Sigmoid colon (tissue), 7 donors: ENCODE measurements at regions of chr3 and their contacts with region 1.

Region 1: DNA sequence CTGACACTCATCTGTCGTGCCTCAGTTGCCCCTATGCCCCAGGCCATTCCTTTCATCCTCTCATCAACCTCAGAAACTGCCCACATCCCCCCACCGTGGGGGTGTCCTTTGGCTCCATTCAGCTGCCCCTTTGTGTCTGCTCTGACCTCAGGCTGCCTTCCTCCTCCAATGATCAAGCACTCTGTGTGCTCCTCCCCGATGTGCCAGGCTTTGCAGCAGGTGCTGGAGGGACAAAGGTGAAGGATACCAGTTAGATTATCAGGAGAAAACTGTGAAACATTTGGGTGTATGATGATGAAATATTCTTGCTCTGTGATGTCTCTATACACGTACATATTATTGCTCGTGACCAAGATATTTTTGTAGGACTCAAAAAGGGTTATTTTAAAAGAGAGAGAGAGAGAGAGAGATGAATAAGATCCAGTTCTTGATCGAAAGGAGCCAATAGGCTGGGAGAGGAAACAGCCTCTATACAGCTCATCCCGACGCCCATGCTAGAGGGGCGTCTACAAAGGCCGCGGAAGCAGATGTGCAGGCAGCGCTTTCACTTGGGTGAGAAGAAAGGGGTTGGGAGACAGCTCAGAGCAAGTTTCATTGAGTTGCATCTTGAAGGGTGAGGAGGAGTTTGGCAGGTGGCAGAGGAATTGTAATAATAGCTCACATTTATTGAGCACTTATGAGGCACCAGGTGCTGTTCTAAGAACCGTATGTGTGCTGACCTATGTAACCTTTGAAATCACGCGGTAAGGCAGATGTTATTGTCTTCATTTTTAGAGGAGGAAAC is 28.3 kb upstream of the ADCY5 start:
- DNase-seq: no peak
- H3K4me3 ChIP-seq: no peak overlapping the region
- H3K27ac ChIP-seq: no peak overlapping the region
- H3K4me1 ChIP-seq: no peaks in the 10 kb centered on the region
- H3K27me3 ChIP-seq: no peaks in the 10 kb centered on the region
- CTCF ChIP-seq: no peak
- EP300 ChIP-seq: no peak
- POLR2A ChIP-seq: no peak

Region 2: GRCh38 chr3:123459881-123460280 is 17.3 kb before region 1 on chr3:
- intact Hi-C with region 1: loop called (anchors 2 kb)
- DNase-seq: no peak
- H3K4me3 ChIP-seq: no peak overlapping the region
- H3K27ac ChIP-seq: no peak overlapping the region
- H3K4me1 ChIP-seq: no peaks in the 10 kb centered on the region
- H3K27me3 ChIP-seq: peaks cover 0 to 28% (median 5%) of the 10 kb centered on the region in 3 donors
- CTCF ChIP-seq: no peak
- EP300 ChIP-seq: no peak
- POLR2A ChIP-seq: no peak

Region 3: DNA sequence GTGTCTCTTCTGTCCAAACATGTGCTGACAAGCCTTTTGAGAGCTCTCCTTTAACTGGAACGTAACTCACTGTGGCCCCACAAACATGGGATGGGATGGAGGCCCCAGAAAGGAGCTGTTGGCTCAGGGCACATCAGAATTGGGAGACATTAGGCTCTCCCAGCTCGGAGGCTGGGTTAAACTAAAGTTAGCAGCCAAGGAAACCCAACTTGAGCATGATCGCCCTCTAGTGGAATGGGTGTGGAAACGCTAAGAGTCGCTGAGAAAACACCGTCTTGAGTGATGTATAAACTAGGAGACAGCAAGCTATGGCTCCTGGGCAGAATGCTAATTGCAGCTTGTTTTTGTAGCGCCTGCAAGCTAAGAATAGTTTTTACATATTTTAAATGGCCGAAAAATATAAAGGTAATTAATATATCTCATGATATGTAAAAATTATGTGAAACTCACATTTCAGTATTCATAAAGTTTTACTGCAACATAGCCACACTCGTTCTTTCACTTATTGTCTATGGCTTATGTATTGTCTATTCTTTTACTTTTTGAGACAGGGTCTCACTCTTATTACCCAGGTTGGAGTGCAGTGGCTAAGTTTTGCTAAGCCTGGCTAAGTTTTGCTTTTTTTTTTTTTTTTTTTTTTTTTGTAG is 246.5 kb after region 1 on chr3:
- intact Hi-C with region 1: no loop called
- DNase-seq: peak; percentile 79
- H3K4me3 ChIP-seq: no peak overlapping the region
- H3K27ac ChIP-seq: peak overlapping the region; percentile 60 to 92 (median 72)
- H3K4me1 ChIP-seq: peaks cover 0 to 50% (median 42%) of the 10 kb centered on the region in 4 donors
- H3K27me3 ChIP-seq: no peaks in the 10 kb centered on the region
- CTCF ChIP-seq: peak; percentile 73 to 81 (median 74)
- EP300 ChIP-seq: no peak
- POLR2A ChIP-seq: no peak